Prostate gland (tissue), 2 donors: ENCODE measurements at regions of chr13 and their contacts with region 1.

Region 1: GRCh38 chr13:23466144-23467002 is 32.9 kb upstream of the SACS start:
- DNase-seq: peak; percentile 64
- H3K4me3 ChIP-seq: peak overlapping the region; percentile 30 to 42
- H3K27ac ChIP-seq: peak overlapping the region; percentile 77 to 84
- H3K4me1 ChIP-seq: no peaks in the 10 kb centered on the region
- H3K27me3 ChIP-seq: no peaks in the 10 kb centered on the region
- CTCF ChIP-seq: peak in 3 of 4 experiments; percentile 49 to 71 (median 68)
- POLR2A ChIP-seq: no peak

Region 2: GRCh38 chr13:23579072-23579895 is 112.9 kb after region 1 on chr13:
- intact Hi-C with region 1: loop called (anchors 5 kb)
- DNase-seq: peak; percentile 93
- H3K4me3 ChIP-seq: peak overlapping the region; percentile 80 to 82
- H3K27ac ChIP-seq: peak overlapping the region; percentile 92 to 95
- H3K4me1 ChIP-seq: no peaks in the 10 kb centered on the region
- H3K27me3 ChIP-seq: no peaks in the 10 kb centered on the region
- CTCF ChIP-seq: peak in 1 of 4 experiments; percentile 1
- POLR2A ChIP-seq: peak; percentile 58

Region 3: DNA sequence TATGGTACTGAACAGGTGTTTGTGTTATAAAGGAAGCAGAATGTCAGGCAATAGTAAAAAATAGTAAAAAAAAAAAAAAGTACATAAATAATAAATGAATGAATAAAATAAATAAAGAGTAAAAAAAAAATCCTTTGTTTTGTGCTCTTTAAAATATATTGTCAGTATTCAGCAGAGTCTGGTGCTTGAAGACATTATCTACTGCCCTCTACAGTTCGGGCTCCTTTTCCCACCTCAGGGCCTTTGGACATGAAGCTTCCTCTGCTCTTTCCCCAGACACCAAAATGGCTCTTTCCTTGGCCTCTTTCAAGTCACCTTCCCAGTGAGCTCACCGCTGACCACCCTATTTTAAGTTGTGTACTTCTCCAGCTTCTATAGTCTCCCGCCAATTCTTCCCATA is 241.3 kb after region 1 on chr13:
- intact Hi-C with region 1: loop called (anchors 10 kb)
- DNase-seq: no peak
- H3K4me3 ChIP-seq: no peak overlapping the region
- H3K27ac ChIP-seq: no peak overlapping the region
- H3K4me1 ChIP-seq: no peaks in the 10 kb centered on the region
- H3K27me3 ChIP-seq: no peaks in the 10 kb centered on the region
- CTCF ChIP-seq: no peak
- POLR2A ChIP-seq: no peak

Region 4: DNA sequence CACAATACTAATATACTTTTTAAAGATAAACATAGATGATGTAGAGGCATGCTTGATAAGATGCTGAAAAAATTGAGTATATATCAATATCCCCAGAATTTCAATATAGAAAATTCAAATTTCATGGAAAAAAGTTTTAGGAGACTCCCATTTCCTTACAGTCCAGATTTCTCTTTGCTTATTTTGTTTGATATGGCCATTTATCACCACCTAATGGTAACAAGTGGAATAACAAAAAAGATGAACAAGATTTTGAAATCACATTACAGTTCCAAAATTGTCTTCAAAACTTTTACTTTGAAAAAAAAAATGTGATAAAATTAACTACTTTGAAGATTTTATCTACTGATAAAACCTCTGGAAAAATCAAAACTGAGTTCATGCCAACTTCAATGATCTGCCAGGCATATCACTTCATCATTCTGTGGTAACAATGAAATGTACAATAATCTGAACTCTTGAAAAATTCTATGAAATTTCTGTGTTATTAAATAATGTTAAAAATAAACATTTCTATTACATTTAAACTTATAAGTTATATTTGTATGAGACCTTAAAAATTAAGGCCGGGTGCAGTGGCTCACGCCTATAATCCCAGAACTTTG is 405.3 kb after region 1 on chr13:
- intact Hi-C with region 1: loop called (anchors 1 kb)
- DNase-seq: no peak
- H3K4me3 ChIP-seq: no peak overlapping the region
- H3K27ac ChIP-seq: peak overlapping the region in 1 of 2 donors; percentile 19
- H3K4me1 ChIP-seq: peaks cover 6% of the 10 kb centered on the region
- H3K27me3 ChIP-seq: no peaks in the 10 kb centered on the region
- CTCF ChIP-seq: peak in 3 of 4 experiments; percentile 64 to 85 (median 67)
- POLR2A ChIP-seq: no peak

Region 5: DNA sequence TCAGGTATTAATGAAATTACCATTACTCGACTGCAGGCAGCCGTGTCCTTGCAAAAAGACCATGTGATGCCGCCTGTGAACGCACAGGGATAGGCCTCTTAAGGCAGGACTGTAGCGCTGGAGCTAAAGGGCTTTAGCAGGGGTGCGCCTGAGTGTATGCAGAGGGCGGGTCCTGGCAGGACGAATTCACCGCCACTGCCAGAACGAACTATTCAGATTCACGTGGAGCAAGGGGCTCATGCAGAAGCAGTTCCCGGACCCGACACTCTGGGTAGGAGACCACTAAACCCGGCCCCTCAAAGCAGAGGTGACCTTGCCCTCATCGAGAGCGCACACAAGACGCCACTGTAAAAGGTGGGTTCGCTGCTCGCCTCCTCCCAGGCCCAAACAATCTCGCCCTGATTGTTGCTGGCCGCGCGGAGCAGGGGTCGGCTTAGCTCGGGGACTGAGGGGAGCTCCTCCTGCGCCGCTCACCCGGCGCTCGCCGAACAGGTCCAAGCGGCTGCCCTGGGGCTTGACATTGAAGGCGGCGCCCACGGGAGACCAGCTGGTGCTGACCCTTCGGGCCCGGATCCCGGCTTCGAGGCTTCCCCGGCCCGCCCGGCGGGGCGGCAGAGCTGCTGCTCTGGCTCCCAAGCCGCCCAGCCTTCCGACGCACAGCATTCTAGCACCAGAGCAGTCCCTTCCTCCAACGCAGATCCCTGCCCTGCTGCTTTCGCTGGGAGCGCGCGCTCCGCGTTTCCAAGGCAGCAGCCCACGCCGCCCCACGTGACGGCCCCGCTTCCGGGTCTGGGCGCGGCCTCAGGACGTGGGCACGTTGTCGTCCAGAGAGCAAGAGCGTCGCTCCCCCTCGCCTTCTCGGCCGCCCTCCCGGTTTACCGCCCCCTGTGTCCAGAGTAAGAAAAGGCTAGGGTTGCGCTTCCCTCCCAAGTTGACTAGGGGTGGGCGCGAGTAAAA is 422.6 kb after region 1 on chr13 and contains the start of gene MIPEP:
- intact Hi-C with region 1: loop called (anchors 5 kb)
- DNase-seq: peak; percentile 92
- H3K4me3 ChIP-seq: peak within 1 kb of the TSS; percentile 81 to 82
- H3K27ac ChIP-seq: peak within 1 kb of the TSS; percentile 77 to 83
- H3K4me1 ChIP-seq: no peaks in the 10 kb centered on the region
- H3K27me3 ChIP-seq: no peaks in the 10 kb centered on the region
- CTCF ChIP-seq: peak; percentile 39 to 85 (median 64)
- POLR2A ChIP-seq: peak; percentile 77
- total RNA-seq, gene MIPEP: 26.2 to 27.1 TPM